GM18951 (cell line): ENCODE measurements at regions of chr3 and their contacts with region 1.

Region 1: GRCh38 chr3:106609666-106610301 is 741.0 kb upstream of the CBLB start:
- POLR2A ChIP-seq: no peak

Region 2: GRCh38 chr3:105553851-105554250 is 1055.9 kb before region 1 on chr3:
- in situ Hi-C with region 1: loop called (anchors 25 kb)
- POLR2A ChIP-seq: no peak

Region 3: DNA sequence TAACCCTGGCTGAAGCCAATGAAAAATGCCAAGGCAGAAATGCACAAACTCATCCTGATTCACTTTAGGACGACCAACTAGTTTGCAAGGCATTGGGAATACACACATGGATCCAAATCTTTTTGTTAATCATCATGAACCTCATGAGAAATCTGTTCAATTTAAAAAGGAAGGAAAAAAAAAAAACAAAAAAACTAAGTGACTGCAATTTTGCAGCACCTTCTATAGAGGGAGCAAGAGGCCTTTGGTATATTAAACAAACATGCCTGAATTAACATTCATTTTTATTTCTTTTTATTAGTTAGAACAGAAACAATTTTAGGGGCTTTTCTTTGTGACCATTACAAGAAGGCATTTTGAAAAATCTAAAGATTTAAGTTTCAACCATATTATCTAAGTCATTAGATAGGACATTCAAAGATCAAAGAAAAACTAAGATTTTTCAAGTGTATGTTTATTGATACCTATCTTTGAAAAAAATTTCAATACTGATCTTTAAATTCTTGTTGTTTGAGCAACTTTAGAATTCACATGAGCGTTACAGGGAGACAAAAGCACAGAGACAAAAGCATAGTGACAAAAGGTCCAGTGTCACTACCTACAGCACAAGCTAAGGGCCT is 923.4 kb before region 1 on chr3:
- in situ Hi-C with region 1: loop called (anchors 25 kb)
- POLR2A ChIP-seq: no peak